ENCODE measurements at regions of chr16 and their contacts with region 1.

Region 1: GRCh38 chr16:6827267-6827666 is 505.4 kb upstream of the RBFOX1 start:
- DNase-seq: no peak
- H3K4me3 ChIP-seq: peak overlapping the region in 1 of 8 donors; percentile 46
- H3K27ac ChIP-seq: peak overlapping the region in 5 of 8 donors; percentile 29 to 74 (median 73)
- H3K4me1 ChIP-seq: no peaks in the 10 kb centered on the region
- H3K27me3 ChIP-seq: no peaks in the 10 kb centered on the region
- CTCF ChIP-seq: no peak
- POLR2A ChIP-seq: no peak

Region 2: DNA sequence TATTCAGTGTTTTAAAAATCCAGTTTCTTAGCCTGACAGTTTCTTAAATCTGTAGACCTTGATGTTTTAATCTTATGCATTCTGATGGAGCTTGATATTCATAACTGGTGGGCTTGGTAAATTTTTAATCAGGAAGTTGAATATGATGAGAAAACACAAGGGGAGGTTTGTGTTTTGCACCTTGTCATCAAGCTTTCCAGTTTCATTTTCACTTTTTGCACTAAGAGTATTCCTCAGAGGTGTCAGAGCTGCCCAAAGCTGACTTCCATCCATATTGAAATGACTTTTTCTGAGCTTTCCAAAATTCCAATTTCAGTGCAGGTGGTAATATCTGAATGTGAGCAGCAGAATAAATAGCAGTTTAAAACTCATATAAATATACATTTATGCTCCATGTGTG is 49.6 kb before region 1 on chr16:
- intact Hi-C with region 1: loop called (anchors 5 kb)
- DNase-seq: no peak
- H3K4me3 ChIP-seq: no peak overlapping the region
- H3K27ac ChIP-seq: no peak overlapping the region
- H3K4me1 ChIP-seq: no peaks in the 10 kb centered on the region
- H3K27me3 ChIP-seq: no peaks in the 10 kb centered on the region
- CTCF ChIP-seq: no peak
- POLR2A ChIP-seq: no peak

Region 3: GRCh38 chr16:6891496-6891895 is 64.2 kb after region 1 on chr16:
- intact Hi-C with region 1: no loop called
- DNase-seq: no peak
- H3K4me3 ChIP-seq: no peak overlapping the region
- H3K27ac ChIP-seq: no peak overlapping the region
- H3K4me1 ChIP-seq: no peaks in the 10 kb centered on the region
- H3K27me3 ChIP-seq: no peaks in the 10 kb centered on the region
- CTCF ChIP-seq: no peak
- POLR2A ChIP-seq: no peak

Measured in spleen (tissue), 13 donors.